Endothelial cell of umbilical vein (primary cell): ENCODE measurements at regions of chr19 and their contacts with region 1.

Region 1: GRCh38 chr19:49817964-49818648 is at the start of gene MED25:
- DNase-seq: peak; percentile 93
- H3K4me3 ChIP-seq: peak within 1 kb of the TSS; percentile 83 to 95 (median 90)
- H3K27ac ChIP-seq: peak within 1 kb of the TSS; percentile 89
- H3K4me1 ChIP-seq: peaks cover 19% of the 10 kb centered on the region
- H3K27me3 ChIP-seq: no peaks in the 10 kb centered on the region
- CTCF ChIP-seq: peak in 1 of 2 donors; percentile 14
- POLR2A ChIP-seq: peak; percentile 75
- total RNA-seq, gene MED25: 55.8 and 62.9 TPM in 2 replicates

Region 2: DNA sequence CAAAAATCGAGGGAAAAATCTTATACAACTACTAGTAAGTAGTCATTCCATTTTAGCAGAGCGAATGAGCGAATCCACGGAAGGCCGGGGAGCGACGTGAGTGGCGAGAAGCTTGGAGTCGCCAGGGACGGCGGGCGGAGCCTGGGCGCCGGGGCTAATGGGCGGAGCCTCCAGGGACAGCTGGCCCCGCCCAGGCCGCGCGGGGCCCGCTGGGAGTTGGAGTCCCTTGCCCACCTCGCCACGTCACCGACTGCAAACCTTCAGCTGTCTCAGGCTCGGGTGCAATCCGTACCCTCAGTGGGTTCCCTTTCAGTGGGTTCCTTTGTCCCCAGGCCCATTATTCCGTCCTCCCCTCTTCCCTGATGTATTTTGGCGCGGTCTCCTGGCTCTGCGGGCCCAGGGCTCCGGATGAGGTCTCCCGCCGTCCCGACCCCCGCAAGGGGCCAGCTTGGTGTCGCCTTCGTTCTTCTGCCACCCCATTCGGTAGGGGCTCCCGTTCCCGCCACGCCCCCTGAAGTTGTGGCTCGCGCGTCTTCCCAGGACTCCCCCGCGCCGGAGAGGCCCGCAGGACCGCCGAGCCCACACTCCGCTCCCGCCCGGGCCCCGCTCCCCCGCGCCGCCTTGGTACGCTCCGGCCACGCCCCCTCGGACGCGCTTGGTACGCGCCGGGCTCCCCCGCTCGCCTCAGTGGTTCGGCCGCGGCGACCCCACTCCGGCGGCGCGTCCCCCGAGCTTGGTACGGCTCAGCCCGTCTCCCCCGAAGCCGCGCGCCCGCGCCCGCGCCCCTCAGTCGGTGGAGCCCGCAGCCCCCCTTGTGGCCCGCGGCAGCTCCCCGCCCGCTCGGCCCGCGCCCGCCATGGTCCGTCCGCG is 32.6 kb after region 1 on chr19 and contains the start of gene PTOV1:
- CTCF ChIA-PET with region 1: interaction called, 15 read pairs
- POLR2A ChIA-PET with region 1: no interaction called
- dilution Hi-C with region 1: no loop called
- intact Hi-C with region 1: loop called (anchors 1 kb)
- DNase-seq: peak; percentile 91
- H3K4me3 ChIP-seq: peak within 1 kb of the TSS; percentile 15 to 67 (median 57)
- H3K27ac ChIP-seq: peak within 1 kb of the TSS; percentile 68
- H3K4me1 ChIP-seq: peaks cover 24% of the 10 kb centered on the region
- H3K27me3 ChIP-seq: no peaks in the 10 kb centered on the region
- CTCF ChIP-seq: no peak
- POLR2A ChIP-seq: peak; percentile 71
- total RNA-seq, gene PTOV1: 184 and 187 TPM in 2 replicates